Left cardiac atrium (tissue), 4 donors: ENCODE measurements at regions of chr2 and their contacts with region 1.

Region 1: DNA sequence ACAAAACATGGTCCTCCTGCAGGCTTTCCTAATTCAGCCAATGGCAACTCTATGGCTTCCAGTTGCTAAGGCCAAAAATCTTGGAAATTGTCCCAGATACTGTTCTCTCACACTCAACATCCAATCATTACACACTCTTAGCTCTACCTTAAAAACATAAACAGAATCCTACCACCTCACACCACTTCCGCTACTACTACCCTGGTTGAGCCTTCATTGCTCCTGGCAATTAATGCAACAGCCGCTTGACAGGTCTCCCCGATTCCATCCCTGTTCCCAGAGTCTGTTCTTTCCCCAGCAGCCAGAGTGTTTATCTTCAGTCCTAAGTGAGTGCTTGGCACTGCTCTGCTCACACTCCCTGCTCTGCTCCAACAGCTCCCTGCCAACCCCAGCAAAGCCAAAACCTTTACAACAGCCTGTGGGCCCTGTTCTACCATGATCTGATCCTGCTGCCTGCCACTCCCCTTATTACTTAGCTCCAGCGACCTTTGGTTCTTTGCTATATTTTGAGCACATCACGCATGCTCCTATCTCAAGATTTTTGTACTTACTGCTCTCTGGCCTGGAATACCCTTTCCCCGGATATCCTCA is 67.5 kb upstream of the AMMECR1L start:
- DNase-seq: peak; percentile 60
- ATAC-seq: peak; percentile 95 to 98

Region 2: DNA sequence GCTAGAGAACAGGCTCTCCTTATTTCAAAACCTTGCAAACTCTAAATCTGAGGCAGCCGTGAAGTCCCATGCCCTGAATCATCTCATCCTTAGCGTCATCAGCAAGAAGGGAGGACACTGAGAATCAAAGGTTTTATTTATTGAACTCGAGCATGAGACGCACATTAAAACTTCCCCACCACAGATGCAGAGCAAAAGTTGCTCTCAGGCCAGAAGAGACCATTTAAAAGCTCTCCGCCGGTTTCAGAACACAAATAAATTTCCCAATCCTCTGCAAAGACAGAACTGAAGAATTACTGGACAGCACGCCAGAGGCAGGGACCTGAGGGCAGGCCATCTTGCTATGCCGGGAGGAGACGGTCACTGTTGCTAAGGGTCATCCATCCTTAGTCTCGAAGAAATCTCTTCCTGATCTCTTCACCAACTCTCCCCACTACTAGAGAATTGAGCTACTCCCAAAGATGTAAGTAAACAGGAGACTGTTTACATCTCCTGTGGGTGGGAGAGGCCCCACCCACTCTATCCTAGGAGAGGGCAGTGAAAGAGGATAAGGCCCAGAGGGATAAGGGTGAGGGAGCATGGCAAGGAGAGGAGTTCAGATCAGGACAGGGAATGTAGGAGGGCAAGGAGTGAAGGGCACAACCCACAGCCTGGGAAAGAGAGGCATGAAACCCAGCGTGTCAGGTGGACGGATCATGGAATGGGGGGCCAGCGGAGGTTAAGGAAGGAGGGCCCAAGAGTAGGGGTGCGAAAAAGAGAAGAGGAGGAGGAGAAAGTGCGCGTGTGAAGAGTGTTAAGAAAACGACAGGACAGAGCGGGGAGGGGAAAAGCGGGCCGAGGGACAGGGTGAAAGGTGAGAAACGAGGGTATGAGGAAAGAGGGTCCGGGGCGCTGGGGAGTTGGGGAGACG is 68.5 kb before region 1 on chr2:
- intact Hi-C with region 1: loop called in 1 of 2 experiments (anchors 5 kb)
- DNase-seq: no peak
- ATAC-seq: peak in 1 of 2 donors; percentile 3